ENCODE measurements at regions of chr10 and their contacts with region 1.

Region 1: DNA sequence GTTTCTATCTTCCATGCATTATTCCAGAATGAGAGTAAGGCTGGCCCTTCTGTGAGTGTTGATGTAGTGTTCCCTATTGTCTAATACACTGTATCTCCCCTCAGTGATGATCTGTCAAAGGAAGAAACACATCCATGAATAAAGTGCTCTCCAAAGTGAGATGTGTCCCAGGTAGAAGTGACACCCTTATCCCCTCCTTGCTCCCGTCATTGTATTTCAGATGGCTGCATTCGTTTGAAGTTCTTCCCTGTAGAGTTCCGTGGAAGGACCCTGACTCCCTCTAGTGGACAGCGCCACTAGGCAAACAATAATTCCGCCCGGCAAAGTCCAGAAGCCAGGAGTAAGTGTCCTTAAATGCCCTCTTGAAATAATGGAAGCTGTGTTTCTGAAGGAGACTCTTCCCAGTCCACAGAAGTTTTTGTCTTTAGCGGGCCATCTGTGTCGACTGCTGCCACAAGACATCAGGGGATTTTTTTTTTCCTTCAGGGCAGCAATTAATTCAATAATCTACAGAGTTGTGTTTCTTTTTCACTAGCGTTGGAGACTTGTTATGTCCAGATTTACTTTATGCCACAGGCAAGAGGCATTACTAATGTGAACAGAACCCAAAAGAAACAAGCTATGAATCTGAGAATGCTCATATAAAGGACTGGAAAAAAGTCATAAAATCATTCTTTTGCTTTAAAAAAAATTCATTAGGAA is 64.6 kb downstream of the THNSL1 start:
- DNase-seq: peak; percentile 50
- CTCF ChIP-seq: peak; percentile 79

Region 2: DNA sequence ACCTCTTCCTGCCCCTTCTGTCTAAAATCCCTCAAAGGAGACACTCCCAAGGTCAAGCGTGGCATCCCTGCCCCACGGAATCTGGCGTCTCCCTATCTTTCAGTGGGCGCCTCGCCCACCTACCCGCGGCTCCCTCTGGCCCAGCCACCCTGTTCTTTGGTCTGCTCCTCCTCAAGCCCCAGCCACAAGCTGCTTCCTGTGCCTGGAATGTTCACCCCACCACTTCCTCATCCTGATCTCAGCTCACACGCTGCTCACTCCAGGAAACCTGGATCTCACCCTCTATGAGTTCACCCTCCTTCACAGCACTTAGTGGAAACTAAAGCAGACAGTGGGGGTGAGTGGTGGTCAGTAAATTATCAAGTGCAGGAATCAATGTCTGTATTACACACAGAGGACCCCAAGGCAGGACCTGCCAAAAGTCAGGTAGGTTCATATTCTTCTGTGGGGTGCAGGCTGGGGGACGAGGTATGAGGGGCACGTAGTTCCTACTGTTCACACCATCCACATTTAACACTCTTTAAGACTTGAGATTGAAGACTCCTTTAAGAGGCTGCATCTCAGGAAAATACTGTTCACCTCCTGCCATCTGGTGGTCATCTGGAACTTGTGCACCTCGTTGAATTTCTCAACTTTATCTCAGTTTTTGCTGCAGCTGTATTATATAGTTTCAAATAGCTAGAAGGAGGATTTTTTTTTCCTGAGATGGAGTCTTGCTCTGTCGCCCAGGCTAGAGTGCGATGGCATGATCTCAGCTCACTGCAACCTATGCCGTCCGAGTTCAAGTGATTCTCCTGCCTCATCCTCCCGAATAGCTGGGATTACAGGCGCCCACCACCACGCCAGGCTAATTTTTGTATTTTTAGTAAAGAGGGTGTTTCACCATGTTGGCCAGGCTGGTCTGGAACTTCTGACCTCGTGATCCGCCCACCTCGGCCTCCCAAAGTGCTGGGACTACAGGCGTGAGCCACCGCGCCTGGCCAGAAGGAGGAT is 524.0 kb before region 1 on chr10:
- CTCF ChIA-PET with region 1: no interaction called
- POLR2A ChIA-PET with region 1: no interaction called
- DNase-seq: peak; percentile 68
- CTCF ChIP-seq: peak; percentile 73

Region 3: GRCh38 chr10:24642622-24643417 is 438.2 kb before region 1 on chr10:
- CTCF ChIA-PET with region 1: interaction called, 10 read pairs
- POLR2A ChIA-PET with region 1: no interaction called
- DNase-seq: peak; percentile 44
- CTCF ChIP-seq: peak; percentile 74

Region 4: GRCh38 chr10:25059764-25060389 is 21.2 kb before region 1 on chr10:
- CTCF ChIA-PET with region 1: interaction called, 21 read pairs
- POLR2A ChIA-PET with region 1: no interaction called
- DNase-seq: no peak
- CTCF ChIP-seq: no peak

Region 5: GRCh38 chr10:25094590-25094989 is 13.6 kb after region 1 on chr10:
- CTCF ChIA-PET with region 1: interaction called, 12 read pairs
- POLR2A ChIA-PET with region 1: no interaction called
- DNase-seq: no peak
- CTCF ChIP-seq: no peak

Region 6: GRCh38 chr10:25120188-25120587 is 39.2 kb after region 1 on chr10:
- CTCF ChIA-PET with region 1: no interaction called
- POLR2A ChIA-PET with region 1: no interaction called
- DNase-seq: no peak
- CTCF ChIP-seq: no peak

Region 7: DNA sequence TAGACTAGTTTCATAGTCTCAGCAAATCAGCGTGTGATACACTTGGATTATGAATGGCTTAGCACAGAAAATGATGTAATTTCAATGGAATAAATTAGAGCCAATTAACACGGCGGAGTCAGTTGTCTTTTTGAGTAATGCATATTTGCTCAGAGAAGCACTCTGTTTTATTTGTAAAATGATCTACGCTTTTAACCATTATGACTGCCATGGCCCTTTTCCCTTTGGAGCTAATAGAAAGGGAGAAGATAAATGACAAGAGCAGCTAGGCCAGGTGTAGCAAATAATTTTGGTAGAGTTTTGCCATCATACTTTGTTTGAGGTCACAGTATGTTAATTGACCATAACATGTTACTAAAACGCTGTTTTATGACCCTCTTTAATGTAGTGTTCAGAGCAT is 180.5 kb after region 1 on chr10:
- CTCF ChIA-PET with region 1: no interaction called
- POLR2A ChIA-PET with region 1: no interaction called
- DNase-seq: no peak
- CTCF ChIP-seq: no peak